ENCODE measurements at regions of chr19 and their contacts with region 1.

Region 1: DNA sequence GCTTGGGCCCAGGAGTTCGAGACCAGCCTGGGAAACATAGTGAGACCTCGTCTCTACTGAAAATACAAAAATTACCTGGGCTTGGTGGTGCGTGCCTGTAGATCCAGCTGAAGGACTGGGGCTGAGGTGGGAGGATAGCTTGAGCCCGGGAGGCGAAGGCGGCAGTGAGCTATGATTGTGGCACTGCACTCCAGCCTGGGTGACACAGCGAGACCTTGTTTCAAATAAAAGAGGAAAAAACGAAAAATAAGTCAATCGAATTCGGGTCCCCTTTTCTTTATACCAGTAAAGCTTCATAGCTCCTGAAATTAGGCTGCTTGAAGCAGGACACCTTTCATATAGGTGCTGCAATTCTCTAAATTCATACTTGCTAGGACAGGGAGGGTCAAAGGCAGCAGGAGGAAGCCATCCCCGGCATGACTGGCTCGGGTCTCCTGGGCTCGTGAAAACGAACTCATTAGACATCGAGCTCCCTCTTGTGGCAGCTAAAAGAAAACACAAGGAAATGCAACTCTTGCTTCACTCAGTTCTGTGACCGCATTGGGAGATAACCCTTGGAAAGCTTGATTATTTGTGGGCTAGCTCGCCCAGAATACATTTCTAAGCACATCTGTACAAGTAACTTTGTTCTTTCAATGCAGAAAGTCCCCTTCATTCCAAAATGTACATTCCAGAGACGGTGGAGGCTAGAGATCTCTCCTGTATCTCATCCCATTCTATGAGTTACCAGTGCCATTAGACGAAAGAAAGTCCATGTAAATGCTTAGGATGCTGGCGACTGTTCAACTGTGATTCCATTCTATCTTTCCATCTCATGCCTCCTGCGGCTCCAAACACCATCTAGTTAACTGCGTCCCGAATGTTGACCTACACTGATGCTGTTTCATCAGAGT is 16.8 kb downstream of the FPR2 start:
- DNase-seq: peak; percentile 81
- H3K4me3 ChIP-seq: no peak overlapping the region
- H3K27ac ChIP-seq: no peak overlapping the region
- H3K4me1 ChIP-seq: no peaks in the 10 kb centered on the region
- CTCF ChIP-seq: peak; percentile 83

Region 2: GRCh38 chr19:51407511-51408131 is 370.2 kb before region 1 on chr19:
- CTCF ChIA-PET with region 1: no interaction called
- POLR2A ChIA-PET with region 1: no interaction called
- intact Hi-C with region 1: no loop called
- DNase-seq: peak; percentile 72
- H3K4me3 ChIP-seq: no peak overlapping the region
- H3K27ac ChIP-seq: peak overlapping the region; percentile 72
- H3K4me1 ChIP-seq: peaks cover 28% of the 10 kb centered on the region
- CTCF ChIP-seq: peak; percentile 84

Region 3: GRCh38 chr19:51570962-51571575 is 206.7 kb before region 1 on chr19 and contains the start of gene ZNF175:
- CTCF ChIA-PET with region 1: no interaction called
- POLR2A ChIA-PET with region 1: no interaction called
- intact Hi-C with region 1: no loop called
- DNase-seq: peak; percentile 95
- H3K4me3 ChIP-seq: peak within 1 kb of the TSS; percentile 80
- H3K27ac ChIP-seq: no peak within 1 kb of the TSS
- H3K4me1 ChIP-seq: peaks cover 24% of the 10 kb centered on the region
- CTCF ChIP-seq: no peak
- total RNA-seq, gene ZNF175: 3.5 and 4.7 TPM in 2 replicates

Region 4: DNA sequence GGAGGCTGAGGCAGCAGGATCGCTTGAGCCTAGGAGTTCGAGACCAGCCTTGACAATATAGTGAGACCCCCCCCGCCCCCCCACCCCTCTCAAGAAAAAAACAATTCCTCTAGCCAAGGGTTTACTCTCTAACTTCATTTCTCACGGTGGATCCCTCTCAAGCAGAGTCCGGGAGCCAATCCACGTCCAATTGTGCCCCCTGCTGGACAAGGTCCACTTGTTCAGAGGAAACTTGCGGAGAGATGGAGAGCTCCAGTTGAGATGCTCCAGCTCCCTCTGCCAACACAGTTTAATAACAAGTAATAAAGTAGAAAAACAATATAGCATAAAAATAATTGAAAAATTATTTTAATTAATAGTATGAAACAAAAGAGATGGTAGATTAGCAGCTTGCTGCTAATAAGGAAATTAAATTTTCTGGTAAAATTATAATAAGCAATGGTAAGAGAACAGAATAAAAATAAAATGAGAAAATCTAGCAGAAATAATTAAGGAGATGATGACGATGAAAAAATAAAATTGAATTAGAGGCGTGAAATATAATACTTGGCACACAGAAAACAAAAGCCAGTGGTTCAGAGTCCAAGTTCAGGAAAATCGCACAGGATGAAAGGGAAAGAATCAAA is 116.7 kb before region 1 on chr19:
- CTCF ChIA-PET with region 1: no interaction called
- POLR2A ChIA-PET with region 1: no interaction called
- intact Hi-C with region 1: loop called (anchors 5 kb)
- DNase-seq: peak; percentile 76
- H3K4me3 ChIP-seq: no peak overlapping the region
- H3K27ac ChIP-seq: no peak overlapping the region
- H3K4me1 ChIP-seq: peaks cover 4% of the 10 kb centered on the region
- CTCF ChIP-seq: peak; percentile 74

Region 5: GRCh38 chr19:51712460-51713083 is 65.2 kb before region 1 on chr19:
- CTCF ChIA-PET with region 1: no interaction called
- POLR2A ChIA-PET with region 1: no interaction called
- intact Hi-C with region 1: loop called (anchors 2 kb)
- DNase-seq: peak; percentile 77
- H3K4me3 ChIP-seq: no peak overlapping the region
- H3K27ac ChIP-seq: no peak overlapping the region
- H3K4me1 ChIP-seq: peaks cover 34% of the 10 kb centered on the region
- CTCF ChIP-seq: peak; percentile 79

Region 6: DNA sequence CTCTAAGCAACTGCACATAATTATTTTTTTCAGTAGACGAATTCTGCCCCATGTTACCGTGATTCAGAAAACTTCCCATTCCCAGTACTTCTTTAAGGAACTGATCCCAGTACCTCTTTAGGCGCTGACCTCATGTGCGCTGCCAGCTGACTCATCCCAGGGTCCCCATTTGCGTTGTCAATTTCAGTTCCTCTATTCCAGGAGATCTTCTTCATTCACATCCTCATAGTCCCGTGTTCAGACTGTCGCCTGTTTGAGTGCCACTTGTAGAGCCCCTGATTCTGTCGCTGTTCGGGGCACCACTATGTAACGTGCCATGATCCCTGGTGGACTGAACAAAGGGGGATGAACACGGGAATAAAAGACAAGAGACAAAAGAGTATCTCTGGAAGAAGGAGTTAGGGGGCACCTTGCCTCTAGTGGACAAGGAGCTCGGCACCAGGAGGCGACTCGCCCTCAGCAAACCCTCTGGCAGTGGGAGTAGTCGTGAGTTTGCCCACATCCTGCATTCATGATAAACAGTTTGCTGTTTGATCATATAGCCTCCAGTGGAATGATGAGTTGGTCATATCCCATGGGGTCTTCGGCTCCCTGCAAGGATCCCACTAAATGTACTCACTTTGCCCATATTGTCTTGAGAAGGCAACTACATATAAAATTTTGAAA is 33.7 kb after region 1 on chr19:
- CTCF ChIA-PET with region 1: no interaction called
- POLR2A ChIA-PET with region 1: no interaction called
- intact Hi-C with region 1: no loop called
- DNase-seq: no peak
- H3K4me3 ChIP-seq: no peak overlapping the region
- H3K27ac ChIP-seq: no peak overlapping the region
- H3K4me1 ChIP-seq: no peaks in the 10 kb centered on the region
- CTCF ChIP-seq: no peak

Region 7: GRCh38 chr19:52237771-52238400 is 460.1 kb after region 1 on chr19:
- CTCF ChIA-PET with region 1: no interaction called
- POLR2A ChIA-PET with region 1: no interaction called
- intact Hi-C with region 1: loop called (anchors 5 kb)
- DNase-seq: peak; percentile 68
- H3K4me3 ChIP-seq: no peak overlapping the region
- H3K27ac ChIP-seq: no peak overlapping the region
- H3K4me1 ChIP-seq: no peaks in the 10 kb centered on the region
- CTCF ChIP-seq: peak; percentile 96

Measured in OCI-LY7 (cell line).